ENCODE measurements at regions of chr11 and their contacts with region 1.

Region 1: DNA sequence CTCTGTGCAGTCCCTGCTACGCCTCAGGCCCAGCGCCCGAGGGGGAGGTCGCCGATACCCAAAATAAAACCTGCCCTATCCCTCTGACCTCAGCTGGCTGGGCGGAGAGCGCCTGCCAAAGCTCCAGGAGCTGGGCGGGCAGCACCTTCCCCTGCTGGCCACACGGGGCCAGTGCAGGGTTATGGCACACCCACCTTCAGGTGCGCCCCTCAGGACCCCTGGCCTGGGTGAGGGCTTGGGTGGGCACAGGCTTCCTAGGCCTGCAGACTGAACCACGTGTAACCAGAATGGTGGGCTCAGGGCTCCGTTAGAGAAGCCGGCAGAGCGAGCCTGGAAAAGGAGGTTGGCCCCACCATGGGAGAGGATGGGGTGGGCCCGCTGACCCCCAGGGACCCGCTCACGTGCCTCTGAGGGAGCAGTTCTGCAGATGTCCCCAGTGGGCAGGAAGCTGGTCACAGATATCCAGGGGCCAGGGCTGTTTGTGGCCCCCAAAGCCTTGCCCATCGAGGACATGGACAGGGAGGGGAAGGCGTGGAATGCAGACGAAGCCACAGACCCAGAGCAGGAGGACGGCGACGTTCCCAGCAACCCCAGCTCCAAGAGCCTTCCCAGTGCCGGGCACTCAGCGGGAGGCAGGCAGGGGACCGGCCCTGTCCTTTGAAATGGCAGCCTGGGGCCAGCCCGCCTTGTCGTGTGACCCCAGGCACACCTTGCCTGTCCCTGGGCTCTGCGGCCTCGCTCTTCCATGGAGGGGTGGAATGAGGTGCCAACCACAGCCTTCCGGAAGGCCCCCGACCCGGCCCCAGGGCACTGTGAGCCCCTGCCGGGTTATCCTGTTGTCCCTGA is 1.6 kb upstream of the TNNT3 start:
- DNase-seq: peak in 6 of 7 donors; percentile 56 to 71 (median 64)
- H3K4me3 ChIP-seq: no peak overlapping the region
- H3K27ac ChIP-seq: peak overlapping the region in 2 of 5 donors; percentile 48 to 71
- H3K4me1 ChIP-seq: peaks cover 0 to 3% of the 10 kb centered on the region in 2 donors
- H3K27me3 ChIP-seq: no peaks in the 10 kb centered on the region
- CTCF ChIP-seq: peak; percentile 59 to 88 (median 78)
- POLR2A ChIP-seq: no peak

Region 2: DNA sequence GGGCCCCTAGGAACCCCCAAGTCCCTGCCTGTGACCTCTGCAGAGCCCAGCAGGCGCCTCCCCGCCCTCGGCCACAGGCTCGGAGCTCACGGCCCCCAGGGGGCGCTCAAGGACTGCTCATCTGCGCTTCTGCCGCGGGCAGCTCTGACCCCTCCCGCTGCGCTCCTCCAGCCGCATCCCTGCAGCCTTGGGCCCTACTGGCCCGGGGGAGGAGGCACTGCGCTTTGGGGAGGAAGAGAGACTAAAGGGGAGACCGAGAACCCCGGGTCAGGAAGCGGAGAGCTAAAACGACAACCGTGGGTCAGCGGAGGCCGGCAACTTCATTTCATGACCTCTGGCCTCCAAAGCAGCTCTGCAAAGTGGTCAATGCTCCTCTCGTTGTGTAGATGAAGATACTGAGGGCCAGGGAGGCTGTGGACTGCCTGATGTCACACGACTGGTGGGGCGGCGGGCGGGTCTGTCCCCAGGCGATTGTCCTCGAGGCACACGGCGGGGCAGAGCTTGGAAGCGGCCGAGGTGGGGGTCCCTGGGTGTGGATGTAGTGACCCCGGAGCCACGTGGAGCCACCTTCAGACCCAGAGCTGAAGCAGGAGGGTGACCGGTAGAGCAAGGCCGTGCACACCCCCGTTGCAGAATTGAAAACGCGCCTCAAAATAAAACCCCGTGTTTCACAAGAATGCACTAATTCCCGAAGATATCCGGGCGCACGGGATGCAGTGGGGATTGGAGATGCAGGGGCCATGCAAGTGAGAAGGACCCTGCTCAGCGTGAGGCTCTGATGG is 223.6 kb before region 1 on chr11:
- intact Hi-C with region 1: loop called in 1 of 2 experiments (anchors 5 kb)
- DNase-seq: peak; percentile 82 to 92 (median 90)
- H3K4me3 ChIP-seq: peak overlapping the region in 1 of 4 donors; percentile 21
- H3K27ac ChIP-seq: no peak overlapping the region
- H3K4me1 ChIP-seq: peaks cover 7 to 11% of the 10 kb centered on the region in 2 donors
- H3K27me3 ChIP-seq: no peaks in the 10 kb centered on the region
- CTCF ChIP-seq: peak; percentile 91 to 96 (median 94)
- POLR2A ChIP-seq: no peak

Region 3: DNA sequence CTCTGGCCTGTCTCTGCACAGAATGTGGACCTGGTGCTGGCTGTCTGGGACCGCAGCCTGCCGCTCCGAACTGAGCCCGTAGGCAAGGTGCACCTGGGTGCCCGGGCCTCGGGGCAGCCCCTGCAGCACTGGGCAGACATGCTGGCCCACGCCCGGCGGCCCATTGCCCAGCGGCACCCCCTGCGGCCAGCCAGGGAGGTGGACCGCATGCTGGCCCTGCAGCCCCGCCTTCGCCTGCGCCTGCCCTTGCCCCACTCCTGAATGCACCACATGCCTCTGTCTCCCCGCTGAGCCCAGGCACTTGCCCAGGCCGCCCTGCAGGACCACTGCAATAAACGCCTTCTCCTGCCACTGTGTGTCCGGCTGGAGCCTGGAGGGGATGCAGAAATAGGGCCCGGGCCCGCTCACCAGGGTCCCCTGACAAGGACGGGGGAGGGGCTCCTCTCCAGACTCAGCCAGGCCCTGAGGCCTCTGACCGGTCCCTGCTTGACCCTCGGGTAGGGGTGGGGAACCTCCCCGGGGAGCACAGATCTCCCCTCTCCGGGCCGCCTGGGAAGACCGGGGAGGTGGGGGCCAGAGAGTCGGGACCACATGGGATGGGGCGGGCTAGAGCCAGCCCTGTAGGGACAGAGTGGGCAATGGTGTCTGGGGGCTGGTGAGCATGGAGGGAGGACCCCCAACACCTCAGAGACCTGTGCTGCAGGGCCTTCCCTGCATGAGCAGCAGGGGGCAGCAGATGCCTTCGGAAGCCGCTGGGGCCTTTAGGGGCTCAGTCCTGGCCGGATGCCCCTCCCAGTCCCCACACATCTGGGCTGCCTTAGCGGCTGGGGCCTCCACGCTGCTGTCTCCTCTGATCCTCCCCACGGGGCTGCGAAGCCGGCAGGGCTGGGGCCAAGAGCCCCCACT is 80.5 kb before region 1 on chr11:
- intact Hi-C with region 1: loop called in 1 of 2 experiments (anchors 5 kb)
- DNase-seq: peak; percentile 70 to 83 (median 77)
- H3K4me3 ChIP-seq: no peak overlapping the region
- H3K27ac ChIP-seq: peak overlapping the region in 2 of 5 donors; percentile 30 to 62
- H3K4me1 ChIP-seq: peaks cover 19 to 20% of the 10 kb centered on the region in 2 donors
- H3K27me3 ChIP-seq: no peaks in the 10 kb centered on the region
- CTCF ChIP-seq: peak; percentile 84 to 97 (median 92)
- POLR2A ChIP-seq: no peak

Region 4: DNA sequence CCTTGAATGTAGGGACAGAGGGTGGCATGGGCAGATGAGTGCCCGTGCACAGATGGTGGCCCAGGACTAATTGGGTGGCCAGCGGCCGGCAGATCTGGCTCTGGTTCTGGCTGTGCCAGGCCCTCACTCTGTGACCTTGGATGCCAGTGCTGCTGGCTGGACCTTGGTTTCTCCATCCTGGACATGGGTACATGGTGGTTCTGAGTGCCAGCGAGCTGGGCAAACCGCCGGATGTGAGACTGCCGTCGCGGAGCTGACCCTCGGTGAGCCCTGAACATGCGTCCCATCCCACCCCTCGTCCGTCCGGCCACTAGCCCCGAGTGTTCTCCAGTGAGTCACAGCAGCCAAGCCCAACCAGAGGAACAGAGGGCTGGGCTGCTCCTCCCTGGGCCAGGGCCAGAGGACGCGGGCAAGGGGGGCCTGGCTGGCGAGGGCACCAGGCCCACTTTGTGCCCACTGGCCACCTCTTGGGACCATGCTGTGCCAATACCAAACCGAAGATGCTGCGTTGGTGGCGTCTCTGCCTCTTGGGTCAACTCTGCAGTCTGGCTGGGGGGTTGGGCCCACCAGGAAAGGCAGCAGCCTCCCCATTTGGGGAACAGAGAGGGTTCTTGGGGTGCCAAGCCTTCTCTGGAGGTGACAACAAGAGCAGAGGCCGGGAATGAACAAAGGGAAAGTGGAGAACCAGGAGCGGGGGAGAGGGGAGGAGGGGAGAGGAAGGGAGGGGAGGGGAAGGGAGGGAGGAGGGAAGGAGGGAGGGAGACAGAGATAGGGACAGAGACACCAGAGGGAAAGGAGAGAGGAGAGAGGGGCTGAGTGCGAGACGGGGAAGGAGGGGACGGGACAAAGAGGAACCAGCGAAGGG is 54.3 kb before region 1 on chr11:
- intact Hi-C with region 1: no loop called
- DNase-seq: peak; percentile 91 to 98 (median 96)
- H3K4me3 ChIP-seq: peak overlapping the region in 3 of 4 donors; percentile 49 to 60 (median 58)
- H3K27ac ChIP-seq: peak overlapping the region; percentile 83 to 97 (median 88)
- H3K4me1 ChIP-seq: peaks cover 31 to 58% of the 10 kb centered on the region in 2 donors
- H3K27me3 ChIP-seq: no peaks in the 10 kb centered on the region
- CTCF ChIP-seq: no peak
- POLR2A ChIP-seq: peak; percentile 2 to 79

Region 5: DNA sequence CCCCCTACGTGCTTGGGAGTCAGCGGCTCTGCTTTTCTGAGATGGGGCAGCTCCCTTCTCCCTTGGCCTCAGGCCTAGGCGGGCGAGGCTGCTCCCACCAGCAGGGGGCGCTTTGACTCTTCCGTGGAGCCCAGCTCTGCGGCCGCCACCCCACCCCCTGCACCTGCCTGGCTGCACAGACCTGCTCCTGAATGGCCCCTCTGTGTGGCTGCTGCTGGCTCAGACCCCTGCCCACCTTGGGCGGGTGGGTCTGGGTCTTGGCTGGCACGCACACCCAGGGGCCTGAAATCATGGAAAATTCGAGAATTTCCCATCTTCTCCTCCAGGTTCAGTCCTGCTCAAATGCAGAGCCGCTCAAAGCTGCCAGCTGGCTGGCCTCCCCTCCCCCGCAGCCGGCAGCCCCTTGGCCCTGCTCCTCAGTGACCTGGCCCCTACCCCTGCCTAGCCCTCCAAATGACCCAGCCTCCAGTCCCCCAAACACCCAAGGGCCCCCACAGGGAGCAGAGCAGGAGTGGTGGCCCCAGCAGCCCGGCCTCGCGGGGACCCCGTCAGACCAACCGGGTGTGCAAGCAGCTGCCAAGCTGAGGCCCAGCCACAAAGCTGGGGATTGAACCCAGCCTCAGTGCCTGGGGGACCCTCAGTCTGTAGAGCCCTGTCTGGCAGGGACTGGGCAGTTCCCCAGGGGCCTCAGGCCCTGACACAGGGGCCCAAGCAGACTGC is 35.2 kb before region 1 on chr11:
- intact Hi-C with region 1: loop called in 1 of 2 experiments (anchors 5 kb)
- DNase-seq: peak; percentile 73 to 88 (median 82)
- H3K4me3 ChIP-seq: no peak overlapping the region
- H3K27ac ChIP-seq: peak overlapping the region in 3 of 5 donors; percentile 26 to 97 (median 76)
- H3K4me1 ChIP-seq: peaks cover 0 to 24% of the 10 kb centered on the region in 2 donors
- H3K27me3 ChIP-seq: no peaks in the 10 kb centered on the region
- CTCF ChIP-seq: peak; percentile 81 to 93 (median 86)
- POLR2A ChIP-seq: no peak

Region 6: GRCh38 chr11:1889224-1890120 is 28.4 kb before region 1 on chr11:
- intact Hi-C with region 1: loop called (anchors 1 kb)
- DNase-seq: peak; percentile 34 to 54 (median 38)
- H3K4me3 ChIP-seq: no peak overlapping the region
- H3K27ac ChIP-seq: peak overlapping the region in 2 of 5 donors; percentile 26 to 62
- H3K4me1 ChIP-seq: no peaks in the 10 kb centered on the region
- H3K27me3 ChIP-seq: no peaks in the 10 kb centered on the region
- CTCF ChIP-seq: no peak
- POLR2A ChIP-seq: no peak

Region 7: GRCh38 chr11:1896923-1897322 is 21.0 kb before region 1 on chr11:
- intact Hi-C with region 1: loop called (anchors 1 kb)
- DNase-seq: no peak
- H3K4me3 ChIP-seq: no peak overlapping the region
- H3K27ac ChIP-seq: no peak overlapping the region
- H3K4me1 ChIP-seq: no peaks in the 10 kb centered on the region
- H3K27me3 ChIP-seq: no peaks in the 10 kb centered on the region
- CTCF ChIP-seq: no peak
- POLR2A ChIP-seq: no peak

Region 8: DNA sequence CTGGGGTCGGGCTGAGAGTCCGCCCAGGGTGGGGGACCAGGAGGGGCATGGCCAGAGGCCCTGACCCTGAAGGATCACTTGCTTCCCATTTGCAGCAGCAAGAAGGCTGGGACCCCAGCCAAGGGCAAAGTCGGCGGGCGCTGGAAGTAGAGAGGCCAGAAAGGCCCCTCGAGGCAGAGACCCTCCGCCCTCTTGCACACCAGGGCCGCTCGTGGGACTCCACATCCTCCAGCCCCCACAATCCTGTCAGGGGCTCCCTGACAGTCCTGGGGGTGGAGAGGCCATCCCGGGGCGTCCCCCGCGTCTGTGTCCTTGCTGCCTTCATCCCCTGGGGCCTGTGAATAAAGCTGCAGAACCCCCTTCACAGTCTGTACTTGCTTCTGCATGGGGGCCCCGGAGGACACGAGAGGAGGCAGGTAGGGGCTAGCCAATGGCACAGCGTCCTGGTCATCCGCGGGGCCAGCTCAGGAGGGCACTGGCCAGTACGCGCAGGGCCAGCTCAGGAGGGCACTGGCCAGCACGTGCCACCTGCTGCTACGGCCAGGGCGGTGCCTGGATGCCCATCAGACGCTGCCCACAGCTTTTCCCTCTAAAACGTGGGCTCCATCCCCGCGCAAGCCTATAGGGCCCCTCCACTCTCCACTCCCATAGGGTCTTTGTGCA is 20.6 kb after region 1 on chr11:
- intact Hi-C with region 1: loop called in 1 of 2 experiments (anchors 1 kb)
- DNase-seq: peak in 2 of 7 donors; percentile 10 to 11
- H3K4me3 ChIP-seq: no peak overlapping the region
- H3K27ac ChIP-seq: peak overlapping the region in 1 of 5 donors; percentile 44
- H3K4me1 ChIP-seq: no peaks in the 10 kb centered on the region
- H3K27me3 ChIP-seq: no peaks in the 10 kb centered on the region
- CTCF ChIP-seq: no peak
- POLR2A ChIP-seq: no peak

Region 9: DNA sequence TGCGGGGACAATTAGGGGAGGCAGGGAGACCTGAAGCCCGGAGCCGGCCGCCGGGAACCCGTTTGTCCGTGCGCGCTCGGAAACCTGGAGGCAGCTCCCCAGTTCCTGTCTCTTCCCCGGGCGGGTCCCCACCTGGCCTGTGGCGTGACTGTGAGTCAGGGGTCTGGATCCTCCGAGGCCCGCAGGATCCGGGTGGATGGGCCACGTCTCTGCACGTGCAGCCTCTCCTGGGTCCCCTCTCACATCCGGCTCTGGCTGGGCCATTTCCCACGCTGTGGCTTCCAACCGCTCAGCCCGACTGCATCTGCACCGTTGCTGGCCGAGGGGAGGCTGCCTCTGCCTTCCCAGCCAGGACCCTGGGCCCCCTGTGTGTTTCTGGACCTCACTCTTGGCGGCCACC is 94.5 kb after region 1 on chr11:
- intact Hi-C with region 1: no loop called
- DNase-seq: no peak
- H3K4me3 ChIP-seq: no peak overlapping the region
- H3K27ac ChIP-seq: no peak overlapping the region
- H3K4me1 ChIP-seq: no peaks in the 10 kb centered on the region
- H3K27me3 ChIP-seq: no peaks in the 10 kb centered on the region
- CTCF ChIP-seq: no peak
- POLR2A ChIP-seq: no peak

Region 10: GRCh38 chr11:2097356-2097997 is 179.6 kb after region 1 on chr11:
- intact Hi-C with region 1: no loop called
- DNase-seq: peak; percentile 16 to 67 (median 35)
- H3K4me3 ChIP-seq: no peak overlapping the region
- H3K27ac ChIP-seq: peak overlapping the region in 3 of 5 donors; percentile 52 to 85 (median 61)
- H3K4me1 ChIP-seq: no peaks in the 10 kb centered on the region
- H3K27me3 ChIP-seq: peaks cover under 1% of the 10 kb centered on the region
- CTCF ChIP-seq: no peak
- POLR2A ChIP-seq: no peak